Activated B cell treated with CpG ODN at 0.5 μM for 24 hours (primary cell): ENCODE measurements at regions of chr5 and their contacts with region 1.

Region 1: DNA sequence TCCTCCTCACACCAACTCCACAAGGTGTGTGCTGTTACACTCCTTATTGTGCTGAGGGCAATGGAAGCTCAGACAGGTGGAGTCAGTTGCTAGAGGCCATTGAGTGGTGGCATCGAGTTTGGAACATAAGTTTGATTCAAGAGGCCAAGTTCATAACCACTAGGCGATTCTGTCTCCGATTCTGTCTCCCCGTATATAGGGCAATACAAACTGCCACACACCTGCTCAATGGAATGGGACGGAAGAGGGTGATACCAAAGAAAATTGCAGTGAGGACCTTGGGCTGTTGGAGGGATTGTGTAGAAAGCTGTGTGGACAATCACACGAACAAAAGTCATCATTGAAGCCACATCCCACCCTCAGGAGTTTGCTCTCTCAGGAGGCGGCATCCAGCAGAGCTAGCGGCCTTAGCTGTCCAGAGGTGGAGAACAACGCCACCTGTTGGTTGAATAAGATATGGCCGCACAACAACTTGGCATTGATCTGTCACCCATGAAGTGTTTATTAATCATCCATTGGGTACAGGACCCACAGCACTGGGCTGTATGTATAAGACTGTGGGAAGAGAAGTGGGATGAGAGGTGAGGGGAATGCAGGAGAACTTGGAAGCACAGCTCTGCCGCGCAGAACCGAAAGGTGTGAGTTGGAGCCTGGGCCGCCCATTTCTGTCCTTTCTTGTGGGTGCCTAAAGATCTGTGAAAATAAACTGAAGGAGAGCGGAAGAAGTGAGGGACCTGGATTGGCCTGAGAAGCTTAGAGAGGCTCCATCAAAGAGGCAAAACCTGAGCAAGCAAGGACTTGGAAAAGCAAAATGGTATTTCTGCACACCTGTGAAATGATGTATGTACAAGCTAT is 16.1 kb upstream of the NEUROG1 start:
- DNase-seq: no peak
- ATAC-seq: peak; percentile 34
- H3K4me3 Mint-ChIP-seq: no peak overlapping the region
- H3K27ac Mint-ChIP-seq: no peak overlapping the region
- H3K4me1 Mint-ChIP-seq: no peaks in the 10 kb centered on the region
- H3K27me3 Mint-ChIP-seq: peaks cover 51% of the 10 kb centered on the region
- CTCF ChIP-seq: no peak

Region 2: GRCh38 chr5:135466178-135467050 is 85.4 kb before region 1 on chr5:
- CTCF ChIA-PET with region 1: interaction called, 12 read pairs
- POLR2A ChIA-PET with region 1: no interaction called
- intact Hi-C with region 1: loop called (anchors 1 kb)
- DNase-seq: peak; percentile 52
- ATAC-seq: peak; percentile 66
- H3K4me3 Mint-ChIP-seq: peak overlapping the region; percentile 64
- H3K27ac Mint-ChIP-seq: no peak overlapping the region
- H3K4me1 Mint-ChIP-seq: peaks cover 6% of the 10 kb centered on the region
- H3K27me3 Mint-ChIP-seq: peaks cover 39% of the 10 kb centered on the region
- CTCF ChIP-seq: no peak